ENCODE measurements at regions of chr5 and their contacts with region 1.

Region 1: DNA sequence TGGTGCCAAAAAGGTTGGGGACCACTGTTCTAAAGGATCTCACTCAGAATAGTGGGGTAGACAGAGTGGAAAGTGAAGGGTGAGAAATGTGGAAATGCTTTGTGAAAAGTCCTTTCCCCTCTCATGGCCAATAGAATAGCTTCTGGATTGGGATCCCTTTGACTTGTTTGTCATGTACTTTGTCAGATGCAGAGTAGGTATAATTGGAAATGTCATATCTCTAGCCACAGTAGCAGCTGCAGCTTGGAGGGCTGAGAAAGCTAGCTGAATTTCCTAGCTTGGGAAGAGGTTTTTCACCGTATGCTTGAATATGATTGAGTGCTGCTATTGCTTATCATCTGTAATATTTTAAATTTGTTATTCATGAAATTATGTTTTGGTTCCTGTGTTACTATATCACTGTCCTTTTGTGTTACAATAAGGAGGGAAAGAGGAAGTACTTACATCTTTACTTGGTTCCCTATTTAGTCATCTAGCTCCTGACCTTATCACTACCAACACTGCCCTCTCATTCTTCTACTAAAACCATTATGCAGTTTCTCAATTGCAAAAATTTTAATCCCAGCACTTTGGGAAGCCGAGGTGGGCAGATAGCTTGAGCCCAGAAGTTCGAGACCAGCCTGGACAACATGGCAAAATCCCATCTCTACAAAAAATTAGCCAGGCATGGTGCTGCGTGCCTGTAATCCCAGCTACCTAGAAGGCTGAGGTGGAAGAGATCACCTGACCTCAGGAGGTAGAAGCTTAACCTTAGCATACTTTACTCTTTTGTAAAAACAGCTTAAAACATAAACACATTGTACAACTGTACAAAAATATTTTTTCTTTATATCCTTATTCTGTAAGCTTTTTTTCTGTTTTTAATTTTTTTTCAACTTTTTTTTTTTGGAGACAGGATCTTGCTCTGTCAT is 12.4 kb downstream of the SLC30A5 start:
- ATAC-seq: no peak
- H3K4me3 ChIP-seq: no peak overlapping the region
- H3K27ac ChIP-seq: no peak overlapping the region
- H3K4me1 ChIP-seq: no peaks in the 10 kb centered on the region

Region 2: DNA sequence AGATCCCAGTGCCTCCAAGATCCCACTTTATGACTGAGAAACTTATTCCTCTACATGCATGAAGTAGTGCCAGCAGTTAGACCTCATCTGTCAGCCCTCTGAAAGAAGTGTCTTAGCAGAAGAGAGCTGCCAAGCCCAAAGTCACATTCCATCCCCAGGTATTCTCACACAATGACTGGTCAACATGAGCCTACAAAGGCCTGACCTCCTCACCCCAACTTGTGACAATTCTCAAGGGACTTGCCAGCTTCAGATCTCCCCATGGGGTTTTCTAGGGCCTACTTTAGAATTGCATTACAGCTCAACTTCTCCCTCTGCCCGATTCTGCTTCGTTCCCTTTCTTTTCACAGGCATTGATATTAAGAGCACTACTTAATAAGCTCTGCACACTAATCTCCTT is 406.3 kb before region 1 on chr5:
- in situ Hi-C with region 1: no loop called
- ATAC-seq: no peak
- H3K4me3 ChIP-seq: no peak overlapping the region
- H3K27ac ChIP-seq: no peak overlapping the region
- H3K4me1 ChIP-seq: no peaks in the 10 kb centered on the region

Region 3: DNA sequence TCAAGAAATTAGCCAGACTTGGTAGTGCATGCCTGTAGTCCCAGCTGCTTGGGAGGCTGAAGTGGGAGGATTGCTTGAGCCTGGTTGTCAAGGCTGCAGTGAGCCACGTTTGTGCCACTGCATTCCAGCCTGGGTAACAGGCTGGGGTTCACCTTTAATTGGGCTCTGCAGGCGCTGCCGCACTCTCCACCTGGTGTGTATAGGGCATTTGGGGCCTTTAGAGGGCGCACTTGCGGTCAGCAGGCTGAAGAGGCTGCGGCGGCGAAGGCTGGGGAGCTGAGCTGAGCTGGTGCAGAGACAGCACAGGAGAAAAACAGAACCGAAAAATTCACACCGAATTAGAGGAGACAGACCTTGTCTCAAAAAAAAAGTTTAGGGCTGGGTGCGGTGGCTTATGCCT is 159.7 kb after region 1 on chr5:
- in situ Hi-C with region 1: loop called in 1 of 9 experiments (anchors 25 kb)
- ATAC-seq: peak in 2 of 8 experiments; percentile 26 to 34
- H3K4me3 ChIP-seq: no peak overlapping the region
- H3K27ac ChIP-seq: no peak overlapping the region
- H3K4me1 ChIP-seq: no peaks in the 10 kb centered on the region